ENCODE measurements at regions of chr22 and their contacts with region 1.

Region 1: DNA sequence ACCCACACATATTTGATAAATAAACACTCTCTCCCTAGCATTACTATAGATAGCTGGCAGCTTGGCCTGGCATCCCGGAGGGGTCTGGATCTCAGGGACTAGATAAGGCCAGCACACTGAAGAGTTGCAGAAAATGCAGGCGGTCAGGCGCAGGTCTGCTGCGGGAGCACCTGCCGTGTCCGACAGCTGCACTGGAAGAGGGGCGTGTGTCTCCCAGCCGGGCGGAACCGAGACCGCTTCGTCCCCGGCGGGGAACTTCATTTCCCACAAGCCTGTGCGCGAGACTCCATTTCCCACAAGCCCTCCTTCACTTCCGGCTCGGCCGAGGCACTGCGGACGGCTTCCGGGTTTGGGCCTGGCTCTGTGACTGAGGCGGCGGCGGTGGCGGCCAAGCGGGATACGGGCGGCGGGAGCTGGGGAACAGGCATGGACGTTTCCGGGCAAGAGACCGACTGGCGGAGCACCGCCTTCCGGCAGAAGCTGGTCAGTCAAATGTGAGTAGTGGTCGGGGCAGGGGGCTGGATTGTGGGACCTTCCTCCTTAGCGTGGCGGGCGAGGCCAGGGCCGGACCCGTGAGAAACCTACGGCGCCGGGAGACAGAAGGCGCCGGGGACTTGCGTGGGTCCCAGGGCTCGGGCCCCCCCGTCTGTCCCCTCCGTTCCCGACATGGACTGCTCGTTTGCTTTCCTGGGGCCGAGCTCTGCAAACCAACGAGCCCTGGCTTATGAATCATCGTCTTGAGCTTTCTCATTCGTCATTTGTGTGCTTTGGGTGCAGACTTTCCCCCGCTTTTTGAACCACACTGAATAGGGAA is at the start of gene MED15:
- DNase-seq: peak; percentile 86
- H3K4me3 ChIP-seq: peak within 1 kb of the TSS; percentile 70 to 96 (median 84)
- H3K27ac ChIP-seq: peak within 1 kb of the TSS; percentile 87
- H3K4me1 ChIP-seq: peaks cover 44% of the 10 kb centered on the region
- H3K27me3 ChIP-seq: no peaks in the 10 kb centered on the region
- CTCF ChIP-seq: no peak
- total RNA-seq, gene MED15: 34.3 to 138 TPM

Region 2: DNA sequence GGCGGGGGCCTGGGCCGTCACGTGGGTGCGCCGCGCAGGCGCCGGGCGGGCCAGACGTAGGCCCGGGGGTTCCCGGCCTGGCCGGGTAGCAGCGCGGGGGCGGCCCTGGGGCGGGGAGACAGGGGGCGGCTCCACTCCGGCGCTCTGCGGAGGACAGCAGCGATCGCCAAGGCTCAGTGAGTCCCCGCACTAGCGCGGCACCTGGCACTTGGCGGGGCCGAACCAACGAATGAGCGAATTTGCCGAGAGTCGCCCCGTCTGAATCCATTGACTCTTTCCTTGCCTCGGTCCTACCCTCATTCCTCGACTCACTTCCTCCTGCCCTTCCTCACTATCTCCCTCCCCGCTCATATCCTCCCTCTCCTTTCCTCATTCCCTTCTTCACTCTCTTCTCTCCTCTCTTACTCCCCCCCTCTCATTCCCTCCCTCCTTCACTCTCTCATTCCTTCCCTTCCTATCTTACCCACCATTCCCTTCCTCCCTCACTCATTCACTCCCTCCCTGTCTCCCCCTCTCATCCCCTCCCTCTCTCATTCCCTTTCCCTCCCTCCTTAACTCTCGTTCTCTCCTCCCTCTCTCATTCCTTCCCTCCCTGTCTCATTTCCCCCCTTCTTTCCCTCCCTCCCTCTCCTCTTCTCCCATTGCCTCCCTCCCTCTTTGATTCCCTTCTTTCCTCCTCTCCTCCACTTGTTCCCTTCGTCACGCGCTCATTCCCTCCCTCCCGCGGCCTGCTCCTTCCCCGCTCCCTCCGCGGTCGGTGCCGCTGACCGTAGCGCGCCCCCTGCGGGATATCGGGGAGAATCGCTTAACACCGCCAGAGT is 11.4 kb before region 1 on chr22:
- CTCF ChIA-PET with region 1: no interaction called
- dilution Hi-C with region 1: no loop called
- in situ Hi-C with region 1: no loop called
- intact Hi-C with region 1: loop called (anchors 2 kb)
- DNase-seq: peak; percentile 92
- H3K4me3 ChIP-seq: peak overlapping the region; percentile 49 to 60 (median 54)
- H3K27ac ChIP-seq: peak overlapping the region; percentile 77
- H3K4me1 ChIP-seq: peaks cover 16% of the 10 kb centered on the region
- H3K27me3 ChIP-seq: no peaks in the 10 kb centered on the region
- CTCF ChIP-seq: peak; percentile 81 to 86

Region 3: GRCh38 chr22:20531315-20532201 is 24.1 kb after region 1 on chr22:
- CTCF ChIA-PET with region 1: interaction called, 5 read pairs
- dilution Hi-C with region 1: no loop called
- in situ Hi-C with region 1: no loop called
- intact Hi-C with region 1: loop called (anchors 1 kb)
- DNase-seq: peak; percentile 95
- H3K4me3 ChIP-seq: no peak overlapping the region
- H3K27ac ChIP-seq: peak overlapping the region; percentile 98
- H3K4me1 ChIP-seq: peaks cover 58% of the 10 kb centered on the region
- H3K27me3 ChIP-seq: no peaks in the 10 kb centered on the region
- CTCF ChIP-seq: no peak

Region 4: GRCh38 chr22:20555276-20555675 is 47.8 kb after region 1 on chr22:
- CTCF ChIA-PET with region 1: no interaction called
- dilution Hi-C with region 1: loop called (anchors 5 kb)
- in situ Hi-C with region 1: no loop called
- intact Hi-C with region 1: no loop called
- DNase-seq: no peak
- H3K4me3 ChIP-seq: no peak overlapping the region
- H3K27ac ChIP-seq: no peak overlapping the region
- H3K4me1 ChIP-seq: peaks cover 11% of the 10 kb centered on the region
- H3K27me3 ChIP-seq: no peaks in the 10 kb centered on the region
- CTCF ChIP-seq: no peak

Measured in mammary epithelial cell (primary cell).